ENCODE measurements at regions of chr7 and their contacts with region 1.

Region 1: DNA sequence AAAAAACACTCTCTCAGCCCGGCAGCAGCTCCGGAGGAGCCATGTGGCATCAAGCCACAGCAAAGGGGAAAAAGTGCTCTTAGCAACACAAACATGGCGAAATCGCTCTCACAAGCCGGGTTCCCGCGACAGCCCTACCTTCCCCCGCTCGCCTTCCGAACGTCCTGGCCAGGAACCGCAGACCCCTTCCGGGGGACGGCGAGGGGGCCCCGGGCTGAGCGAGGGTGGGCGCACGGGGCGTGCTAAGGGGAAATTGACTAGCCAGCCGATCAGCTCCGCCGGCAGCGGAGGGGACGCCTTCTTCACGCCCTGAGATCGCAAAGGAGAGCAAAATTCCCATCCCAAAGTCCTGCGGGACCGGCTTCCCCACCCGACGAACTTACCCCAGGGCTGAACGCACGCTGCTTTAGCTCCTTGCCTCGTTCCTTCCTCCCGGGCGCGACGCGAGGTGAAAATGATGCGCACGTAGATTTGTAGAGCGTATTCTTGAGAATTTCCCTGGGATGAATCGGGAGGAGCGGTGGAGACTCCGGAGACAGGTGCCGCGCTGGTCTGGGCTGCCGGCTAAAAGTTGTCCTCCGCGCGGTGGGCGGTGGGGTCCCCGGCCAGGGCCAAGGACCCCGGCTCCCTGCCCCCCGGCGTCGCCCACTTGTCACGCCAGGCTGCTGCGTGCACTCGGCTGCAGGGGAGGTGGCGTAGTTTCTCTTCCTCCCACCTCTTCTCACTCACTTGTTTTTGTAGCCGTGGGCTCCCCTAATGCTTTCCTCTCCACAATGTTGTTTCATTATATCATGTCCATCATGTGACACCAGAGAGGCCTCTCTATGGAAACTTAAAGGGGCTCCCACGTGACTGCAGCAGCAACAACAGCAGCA is 220.1 kb upstream of the MKLN1 start:
- DNase-seq: peak; percentile 71 to 80 (median 75)
- H3K4me3 ChIP-seq: peak overlapping the region; percentile 88
- H3K27ac ChIP-seq: peak overlapping the region; percentile 97 to 98
- H3K4me1 ChIP-seq: peaks cover 17% of the 10 kb centered on the region
- H3K27me3 ChIP-seq: no peaks in the 10 kb centered on the region
- CTCF ChIP-seq: no peak
- EP300 ChIP-seq: no peak
- POLR2A ChIP-seq: peak; percentile 86

Region 2: GRCh38 chr7:130896898-130897514 is 210.6 kb before region 1 on chr7:
- intact Hi-C with region 1: loop called in 1 of 4 experiments (anchors 5 kb)
- DNase-seq: peak; percentile 74 to 86 (median 79)
- H3K4me3 ChIP-seq: no peak overlapping the region
- H3K27ac ChIP-seq: peak overlapping the region; percentile 13 to 48
- H3K4me1 ChIP-seq: peaks cover 13% of the 10 kb centered on the region
- H3K27me3 ChIP-seq: no peaks in the 10 kb centered on the region
- CTCF ChIP-seq: peak; percentile 67 to 89 (median 78)
- EP300 ChIP-seq: no peak
- POLR2A ChIP-seq: no peak

Region 3: DNA sequence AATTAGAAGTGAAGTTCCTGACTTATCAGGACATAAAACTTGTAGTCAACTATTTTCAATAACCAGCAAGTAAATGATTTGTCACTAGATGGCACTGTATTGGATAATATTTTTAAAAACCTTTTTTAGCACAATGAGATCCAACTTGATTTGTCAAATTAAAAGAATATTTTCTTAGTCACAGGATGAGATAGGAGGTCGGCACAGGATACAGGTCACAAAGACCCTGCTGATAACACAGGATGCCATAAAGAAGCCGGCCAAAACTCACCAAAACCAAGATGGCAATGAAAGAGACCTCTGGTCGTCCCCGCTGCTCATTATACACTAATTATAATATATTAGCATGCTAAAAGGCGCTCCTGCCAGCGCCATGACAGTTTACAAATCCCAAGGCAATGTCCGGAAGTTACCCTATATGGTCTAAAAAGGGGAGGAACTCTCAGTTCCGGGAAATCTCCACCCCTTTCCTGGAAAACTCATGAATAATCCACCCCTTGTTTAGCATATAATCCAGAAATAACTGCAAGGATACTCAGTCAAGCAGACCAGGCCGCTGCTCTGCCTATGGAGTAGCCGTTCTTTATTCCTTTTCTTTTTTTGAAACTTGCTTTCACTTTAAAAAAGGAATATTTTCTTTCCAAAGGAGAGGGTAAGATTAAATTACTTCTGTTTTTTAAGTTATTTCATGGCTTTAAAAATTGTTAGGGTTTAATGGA is 35.6 kb before region 1 on chr7:
- intact Hi-C with region 1: loop called in 1 of 4 experiments (anchors 2 kb)
- DNase-seq: peak; percentile 42 to 69 (median 57)
- H3K4me3 ChIP-seq: no peak overlapping the region
- H3K27ac ChIP-seq: peak overlapping the region in 1 of 2 donors; percentile 58
- H3K4me1 ChIP-seq: peaks cover 19% of the 10 kb centered on the region
- H3K27me3 ChIP-seq: no peaks in the 10 kb centered on the region
- CTCF ChIP-seq: peak in 2 of 3 donors; percentile 18 to 19
- EP300 ChIP-seq: peak; percentile 58
- POLR2A ChIP-seq: no peak

Region 4: GRCh38 chr7:131225619-131226513 is 118.3 kb after region 1 on chr7:
- intact Hi-C with region 1: loop called in 1 of 4 experiments (anchors 5 kb)
- DNase-seq: peak; percentile 67 to 86 (median 78)
- H3K4me3 ChIP-seq: no peak overlapping the region
- H3K27ac ChIP-seq: peak overlapping the region; percentile 13 to 66
- H3K4me1 ChIP-seq: peaks cover 5% of the 10 kb centered on the region
- H3K27me3 ChIP-seq: no peaks in the 10 kb centered on the region
- CTCF ChIP-seq: no peak
- EP300 ChIP-seq: peak; percentile 52
- POLR2A ChIP-seq: no peak

Region 5: DNA sequence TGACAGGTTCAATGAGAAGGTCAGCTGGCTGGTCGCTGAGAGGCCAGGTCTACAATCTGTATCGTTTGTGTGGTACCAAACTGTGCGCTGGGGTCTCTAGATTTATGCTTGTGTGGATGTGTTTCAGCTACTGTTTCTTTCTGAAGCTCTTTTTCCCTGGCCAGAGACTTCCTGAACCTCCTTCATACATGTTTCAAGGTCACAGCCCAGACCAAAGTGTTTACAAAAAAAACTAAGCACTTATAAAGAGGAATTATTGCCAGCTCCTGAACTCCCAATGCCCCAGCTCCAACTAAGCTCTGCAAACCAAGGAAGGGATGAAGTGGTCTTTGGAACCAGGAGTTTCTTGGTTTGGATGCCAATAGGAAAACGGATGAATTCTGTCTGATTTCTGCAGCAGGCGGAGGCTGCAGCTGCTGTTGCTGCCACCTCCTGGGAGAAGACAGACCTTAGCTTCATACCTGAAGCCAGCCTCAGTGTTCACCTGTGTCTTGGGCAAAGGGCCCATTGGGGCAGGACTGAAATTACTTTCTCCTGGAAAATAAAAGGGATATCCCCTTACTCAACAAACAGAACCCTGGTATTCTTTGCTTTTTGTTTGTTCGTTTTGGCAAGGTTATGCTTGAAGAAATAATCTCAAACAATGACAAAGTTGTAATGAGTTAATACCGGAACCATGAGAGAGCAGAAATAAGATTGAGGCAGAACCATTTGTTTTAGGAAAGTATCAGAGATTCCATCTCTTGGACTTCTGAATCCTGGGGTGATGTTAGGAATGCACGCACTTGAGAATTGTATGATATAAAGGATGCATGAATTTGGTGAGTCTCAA is 195.5 kb after region 1 on chr7:
- intact Hi-C with region 1: loop called in 1 of 4 experiments (anchors 5 kb)
- DNase-seq: peak in 2 of 5 donors; percentile 39 to 47
- H3K4me3 ChIP-seq: no peak overlapping the region
- H3K27ac ChIP-seq: no peak overlapping the region
- H3K4me1 ChIP-seq: peaks cover 3% of the 10 kb centered on the region
- H3K27me3 ChIP-seq: no peaks in the 10 kb centered on the region
- CTCF ChIP-seq: peak in 1 of 3 donors; percentile 27
- EP300 ChIP-seq: no peak
- POLR2A ChIP-seq: no peak

Region 6: GRCh38 chr7:131327626-131328376 is 220.2 kb after region 1 on chr7 and contains the start of gene MKLN1:
- intact Hi-C with region 1: loop called in 2 of 4 experiments (anchors 5 kb)
- DNase-seq: peak; percentile 89 to 93 (median 91)
- H3K4me3 ChIP-seq: peak within 1 kb of the TSS; percentile 97
- H3K27ac ChIP-seq: peak within 1 kb of the TSS; percentile 93 to 96
- H3K4me1 ChIP-seq: peaks cover 8% of the 10 kb centered on the region
- H3K27me3 ChIP-seq: no peaks in the 10 kb centered on the region
- CTCF ChIP-seq: peak in 1 of 3 donors; percentile 20
- EP300 ChIP-seq: no peak
- POLR2A ChIP-seq: peak; percentile 75
- total RNA-seq, gene MKLN1: 46.6 to 87.1 (median 73.6) TPM

Region 7: GRCh38 chr7:131424219-131424822 is 316.7 kb after region 1 on chr7:
- intact Hi-C with region 1: loop called in 1 of 4 experiments (anchors 10 kb)
- DNase-seq: no peak
- H3K4me3 ChIP-seq: no peak overlapping the region
- H3K27ac ChIP-seq: no peak overlapping the region
- H3K4me1 ChIP-seq: no peaks in the 10 kb centered on the region
- H3K27me3 ChIP-seq: no peaks in the 10 kb centered on the region
- CTCF ChIP-seq: peak in 2 of 3 donors; percentile 34 to 65
- EP300 ChIP-seq: no peak
- POLR2A ChIP-seq: no peak